B cell (primary cell): ENCODE measurements at regions of chr1 and their contacts with region 1.

Region 1: DNA sequence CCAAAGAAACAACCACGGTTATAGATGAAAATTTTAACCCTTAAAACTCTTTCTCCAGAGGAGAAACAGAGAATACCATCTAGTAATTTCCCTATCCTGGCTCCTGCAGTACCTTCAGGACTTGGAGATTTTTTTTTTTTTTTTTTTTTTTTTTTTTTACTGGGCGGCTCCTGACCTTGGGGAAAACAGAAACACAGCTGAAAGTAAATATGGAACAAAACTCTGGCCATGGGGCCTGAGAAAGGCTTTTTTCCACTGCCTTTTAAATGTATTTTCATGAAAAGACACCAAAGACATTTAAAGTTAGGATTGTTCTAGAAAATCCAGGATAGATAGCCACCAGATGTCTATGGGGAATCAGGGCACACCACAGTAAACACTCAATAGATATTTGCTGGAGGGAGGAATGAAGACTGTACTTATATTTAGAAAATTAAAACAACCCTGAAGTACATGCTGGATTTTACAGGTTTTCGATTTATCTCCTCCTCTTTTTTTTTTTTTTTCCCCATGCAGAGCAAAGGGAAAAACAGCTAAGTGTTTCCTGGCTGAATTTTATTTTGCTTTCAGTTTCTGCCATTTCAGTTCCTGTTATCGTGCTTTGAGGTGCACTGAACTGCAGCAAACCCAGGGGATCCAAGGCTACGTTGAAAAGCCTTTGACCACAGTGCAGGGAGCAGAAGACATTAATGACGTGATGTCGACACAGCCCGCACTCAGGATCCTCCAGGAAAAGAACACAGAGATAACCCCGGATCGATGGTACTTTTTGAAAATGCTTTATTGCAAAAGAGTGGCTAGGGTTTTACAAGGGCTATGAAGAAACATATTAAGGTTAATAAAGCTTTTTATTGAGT is 35.7 kb upstream of the CNN3 start:
- DNase-seq: peak; percentile 76
- ATAC-seq: peak; percentile 90
- H3K4me3 ChIP-seq: peak overlapping the region; percentile 6 to 74 (median 52)
- H3K4me3 Mint-ChIP-seq: peak overlapping the region; percentile 86
- H3K27ac ChIP-seq: peak overlapping the region; percentile 66 to 78
- H3K27ac Mint-ChIP-seq: peak overlapping the region; percentile 88
- H3K4me1 ChIP-seq: peaks cover 25 to 31% of the 10 kb centered on the region in 2 donors
- H3K4me1 Mint-ChIP-seq: peaks cover 30% of the 10 kb centered on the region
- H3K27me3 ChIP-seq: no peaks in the 10 kb centered on the region
- H3K27me3 Mint-ChIP-seq: no peaks in the 10 kb centered on the region
- CTCF ChIP-seq: no peak

Region 2: GRCh38 chr1:94983171-94983739 is 20.6 kb after region 1 on chr1:
- CTCF ChIA-PET with region 1: interaction called, 15 read pairs
- POLR2A ChIA-PET with region 1: interaction called, 7 read pairs
- intact Hi-C with region 1: loop called (anchors 1 kb)
- DNase-seq: no peak
- ATAC-seq: no peak
- H3K4me3 ChIP-seq: no peak overlapping the region
- H3K4me3 Mint-ChIP-seq: no peak overlapping the region
- H3K27ac ChIP-seq: no peak overlapping the region
- H3K27ac Mint-ChIP-seq: no peak overlapping the region
- H3K4me1 ChIP-seq: peaks cover 29 to 30% of the 10 kb centered on the region in 2 donors
- H3K4me1 Mint-ChIP-seq: peaks cover 44% of the 10 kb centered on the region
- H3K27me3 ChIP-seq: no peaks in the 10 kb centered on the region
- H3K27me3 Mint-ChIP-seq: no peaks in the 10 kb centered on the region
- CTCF ChIP-seq: no peak

Region 3: DNA sequence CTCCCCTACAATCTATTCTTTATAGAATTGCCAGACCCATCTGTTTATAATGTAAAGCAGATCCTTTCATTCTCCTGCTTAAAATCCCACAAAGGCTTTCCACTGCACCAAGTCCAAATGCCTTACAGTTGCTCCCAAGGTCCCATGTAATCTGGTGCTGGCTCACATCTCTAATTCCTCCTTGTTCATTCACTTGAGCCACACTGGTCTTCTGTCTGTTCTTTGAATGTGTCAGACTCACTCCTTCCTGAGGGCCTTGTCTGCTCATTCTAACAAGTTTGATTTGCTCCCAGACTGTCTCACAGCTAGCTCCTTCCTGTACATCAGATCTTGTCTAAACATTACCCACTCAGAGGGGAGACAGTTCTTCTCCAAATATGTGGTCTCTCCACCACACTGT is 71.2 kb after region 1 on chr1:
- CTCF ChIA-PET with region 1: no interaction called
- POLR2A ChIA-PET with region 1: no interaction called
- intact Hi-C with region 1: no loop called
- DNase-seq: no peak
- ATAC-seq: no peak
- H3K4me3 ChIP-seq: no peak overlapping the region
- H3K4me3 Mint-ChIP-seq: no peak overlapping the region
- H3K27ac ChIP-seq: no peak overlapping the region
- H3K27ac Mint-ChIP-seq: no peak overlapping the region
- H3K4me1 ChIP-seq: no peaks in the 10 kb centered on the region
- H3K4me1 Mint-ChIP-seq: no peaks in the 10 kb centered on the region
- H3K27me3 ChIP-seq: no peaks in the 10 kb centered on the region
- H3K27me3 Mint-ChIP-seq: no peaks in the 10 kb centered on the region
- CTCF ChIP-seq: no peak